Mammary epithelial cell (primary cell): ENCODE measurements at regions of chr3 and their contacts with region 1.

Region 1: DNA sequence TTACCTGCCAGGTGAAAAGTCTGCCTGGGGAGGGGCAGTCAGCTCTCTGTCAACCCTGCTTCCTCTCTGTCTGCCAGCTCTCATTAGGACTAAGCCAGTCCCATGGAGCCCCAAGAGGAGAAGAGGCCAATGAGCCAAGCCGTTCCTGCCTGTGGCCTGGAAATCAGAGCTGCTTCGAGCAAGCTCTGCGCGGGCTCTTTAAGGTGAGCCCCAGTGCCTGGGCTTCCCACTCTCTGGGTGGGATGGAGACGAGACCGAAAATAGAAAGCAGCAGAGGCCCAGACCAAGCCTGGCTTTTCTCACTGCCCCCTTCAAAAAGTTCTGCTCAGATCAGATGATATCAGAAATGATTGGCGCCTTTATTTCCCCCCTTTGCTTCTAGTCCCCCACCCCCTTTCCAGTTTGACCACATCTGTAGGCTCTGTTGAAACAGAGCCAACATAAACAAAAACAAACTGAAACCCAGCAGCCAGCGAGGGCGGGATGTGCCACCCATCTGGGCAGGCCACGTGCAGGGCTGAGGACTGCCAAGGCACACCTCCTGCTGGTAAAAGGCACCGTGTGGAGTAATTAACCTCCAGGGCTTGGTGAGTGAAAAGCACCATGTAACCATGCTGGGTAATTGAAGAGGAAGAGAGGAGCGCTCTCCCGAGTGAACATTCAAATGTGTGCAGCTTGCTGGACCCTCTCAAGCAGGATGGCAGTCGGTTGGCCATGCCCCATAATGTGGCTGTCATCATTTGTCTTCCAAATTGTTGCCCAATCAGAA is 471.0 kb upstream of the PROK2 start:
- DNase-seq: peak; percentile 23
- H3K4me3 ChIP-seq: no peak overlapping the region
- H3K27ac ChIP-seq: no peak overlapping the region
- H3K4me1 ChIP-seq: peaks cover 3% of the 10 kb centered on the region
- H3K27me3 ChIP-seq: peaks cover 16% of the 10 kb centered on the region
- CTCF ChIP-seq: peak in 1 of 2 donors; percentile 44

Region 2: GRCh38 chr3:71978150-71978721 is 277.7 kb before region 1 on chr3:
- CTCF ChIA-PET with region 1: no interaction called
- dilution Hi-C with region 1: no loop called
- in situ Hi-C with region 1: loop called in 1 of 2 experiments (anchors 25 kb)
- intact Hi-C with region 1: loop called (anchors 5 kb)
- DNase-seq: no peak
- H3K4me3 ChIP-seq: no peak overlapping the region
- H3K27ac ChIP-seq: no peak overlapping the region
- H3K4me1 ChIP-seq: peaks cover 22% of the 10 kb centered on the region
- H3K27me3 ChIP-seq: no peaks in the 10 kb centered on the region
- CTCF ChIP-seq: no peak

Region 3: DNA sequence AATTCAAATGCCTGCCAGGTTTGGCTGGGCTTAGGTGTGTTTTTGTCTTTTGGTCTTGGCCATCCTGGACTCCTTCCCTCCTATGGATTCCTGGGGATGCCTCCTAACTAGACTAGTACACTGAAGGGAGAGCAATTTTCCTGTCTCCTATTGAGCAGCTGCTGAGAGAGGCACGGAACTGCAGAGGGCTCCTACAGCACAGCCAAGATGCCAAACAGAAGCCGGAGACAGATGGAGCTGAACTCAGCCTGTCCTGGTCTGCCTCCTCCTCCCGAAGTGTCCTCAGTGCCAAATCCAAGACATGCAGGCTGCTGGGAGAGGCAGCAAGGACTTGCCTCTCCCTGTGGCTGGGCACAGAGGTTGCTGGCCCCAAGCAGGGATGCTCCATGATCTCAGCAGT is 214.5 kb before region 1 on chr3:
- CTCF ChIA-PET with region 1: no interaction called
- dilution Hi-C with region 1: no loop called
- in situ Hi-C with region 1: no loop called
- intact Hi-C with region 1: loop called (anchors 10 kb)
- DNase-seq: no peak
- H3K4me3 ChIP-seq: no peak overlapping the region
- H3K27ac ChIP-seq: no peak overlapping the region
- H3K4me1 ChIP-seq: no peaks in the 10 kb centered on the region
- H3K27me3 ChIP-seq: no peaks in the 10 kb centered on the region
- CTCF ChIP-seq: peak in 1 of 2 donors; percentile 8

Region 4: DNA sequence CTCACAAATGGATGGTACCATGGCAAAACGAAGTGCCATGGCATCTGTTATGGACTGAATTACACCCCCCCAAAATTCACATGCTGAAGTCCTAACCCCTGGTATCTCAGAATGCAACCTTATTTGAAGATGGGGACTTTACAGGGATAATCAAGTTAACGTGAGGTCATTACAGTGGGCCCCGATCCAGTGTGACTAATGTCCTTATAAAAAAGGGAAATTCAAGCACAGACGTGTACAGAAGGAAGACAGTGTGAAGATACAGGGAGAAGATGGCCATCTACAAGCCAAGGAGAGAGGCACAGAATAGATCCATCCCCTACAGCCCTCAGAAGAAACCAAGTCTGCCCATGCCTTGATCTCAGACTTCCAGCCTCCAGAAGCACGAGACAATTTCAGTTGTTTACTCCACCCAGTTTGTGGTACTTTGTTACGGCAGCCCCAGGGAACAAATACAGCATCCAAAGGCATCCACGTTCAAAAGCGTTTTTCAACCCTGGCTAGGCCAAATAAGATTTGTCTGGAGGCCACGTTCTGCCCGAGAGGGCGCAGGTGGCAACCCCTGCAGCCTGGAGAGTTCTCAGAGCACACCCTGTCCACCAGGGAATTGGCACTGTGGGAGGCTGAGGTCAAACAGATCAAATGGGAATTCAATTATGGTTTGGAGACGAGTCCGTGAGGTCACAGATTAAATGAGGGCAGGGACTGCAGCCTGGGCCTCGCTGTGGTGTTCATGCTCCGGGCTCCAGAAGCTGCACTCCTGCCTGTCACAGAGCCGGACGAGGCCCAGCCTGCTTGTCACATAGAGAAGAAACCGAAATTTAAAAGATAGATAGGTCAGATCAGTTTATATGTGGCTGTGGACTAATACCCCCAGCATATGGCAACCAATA is 97.5 kb after region 1 on chr3:
- CTCF ChIA-PET with region 1: no interaction called
- dilution Hi-C with region 1: no loop called
- in situ Hi-C with region 1: no loop called
- intact Hi-C with region 1: no loop called
- DNase-seq: peak; percentile 52
- H3K4me3 ChIP-seq: no peak overlapping the region
- H3K27ac ChIP-seq: no peak overlapping the region
- H3K4me1 ChIP-seq: no peaks in the 10 kb centered on the region
- H3K27me3 ChIP-seq: peaks cover 3% of the 10 kb centered on the region
- CTCF ChIP-seq: no peak